CD4-positive, alpha-beta T cell (primary cell): ENCODE measurements at regions of chr10 and their contacts with region 1.

Region 1: DNA sequence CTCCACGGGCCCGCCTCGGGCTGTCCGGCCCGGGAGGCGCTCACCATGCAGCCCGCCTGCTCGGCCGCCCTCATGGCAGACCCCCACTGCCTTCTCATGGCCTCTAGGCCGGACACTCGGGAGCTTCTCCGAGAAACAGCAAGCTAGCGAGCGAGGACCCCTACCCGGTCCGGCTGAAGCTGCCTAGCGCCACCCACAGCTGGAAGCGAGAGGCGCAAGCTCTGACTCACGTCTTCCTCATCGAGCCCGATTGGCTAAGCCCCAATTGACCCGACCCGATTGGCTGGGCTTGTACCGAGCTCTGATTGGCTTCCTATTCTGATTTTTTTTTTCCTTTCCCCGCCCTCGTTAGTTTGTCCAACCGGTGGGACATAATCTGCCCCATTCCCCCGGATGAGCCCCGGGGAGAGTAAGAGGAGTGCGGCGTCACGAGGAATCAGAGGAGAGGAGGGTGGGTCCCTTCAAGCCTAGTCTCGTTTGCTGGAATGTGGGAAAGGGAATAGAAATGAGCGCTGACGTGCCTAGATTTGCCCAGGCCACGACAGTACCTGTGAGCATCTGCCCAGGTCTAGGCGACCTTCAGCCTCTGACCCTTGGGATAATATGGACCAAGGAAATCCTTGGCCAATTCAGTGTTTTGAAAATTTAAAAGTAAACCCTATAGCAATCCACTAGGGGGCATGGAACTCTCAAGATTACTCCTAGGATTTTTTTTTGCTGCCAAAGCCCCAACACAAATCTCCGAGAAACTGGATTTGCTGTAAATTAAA is at the start of gene TYSND1:
- DNase-seq: peak; percentile 84 to 97 (median 90)
- ATAC-seq: peak; percentile 82
- H3K4me3 ChIP-seq: peak within 1 kb of the TSS; percentile 82
- H3K4me3 Mint-ChIP-seq: peak within 1 kb of the TSS; percentile 92
- H3K27ac ChIP-seq: peak within 1 kb of the TSS; percentile 76 to 87
- H3K27ac Mint-ChIP-seq: peak within 1 kb of the TSS; percentile 91
- H3K4me1 ChIP-seq: peaks cover 32% of the 10 kb centered on the region
- H3K4me1 Mint-ChIP-seq: peaks cover 45% of the 10 kb centered on the region
- H3K27me3 ChIP-seq: no peaks in the 10 kb centered on the region
- H3K27me3 Mint-ChIP-seq: no peaks in the 10 kb centered on the region
- CTCF ChIP-seq: peak; percentile 78
- total RNA-seq, gene TYSND1: 12.6 to 13.0 TPM

Region 2: DNA sequence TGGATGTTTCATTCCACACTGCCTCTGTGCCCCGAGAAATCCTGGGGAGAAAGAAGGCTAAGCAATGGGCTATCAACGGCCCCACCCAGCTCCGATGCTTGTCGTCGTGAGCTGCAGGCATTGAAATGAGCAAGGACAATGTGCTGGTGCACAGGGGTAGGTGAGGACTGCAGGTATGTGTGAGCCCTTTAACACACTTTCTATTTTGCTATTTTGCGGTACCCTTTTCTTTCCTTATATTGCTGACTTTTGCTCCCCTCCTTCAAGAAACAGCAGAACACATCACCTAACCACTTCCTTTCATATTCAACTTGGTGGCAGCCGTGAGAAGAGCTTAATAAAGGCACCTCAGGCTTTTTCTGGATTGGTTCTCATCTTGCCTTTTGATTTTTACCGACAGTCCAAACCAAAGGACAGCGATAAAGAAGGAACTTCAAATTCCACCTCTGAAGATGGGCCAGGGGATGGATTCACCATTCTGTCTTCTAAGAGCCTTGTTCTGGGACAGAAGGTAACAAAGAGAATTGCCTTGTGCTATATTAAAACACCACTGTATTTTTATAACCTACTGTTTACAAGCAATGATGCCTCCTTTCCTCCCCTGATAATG is 53.2 kb before region 1 on chr10:
- CTCF ChIA-PET with region 1: interaction called, 7 read pairs
- POLR2A ChIA-PET with region 1: interaction called, 61 read pairs
- intact Hi-C with region 1: loop called in 1 of 2 experiments (anchors 2 kb)
- DNase-seq: peak in 6 of 14 experiments; percentile 2 to 79 (median 42)
- ATAC-seq: peak; percentile 63
- H3K4me3 ChIP-seq: peak overlapping the region; percentile 49
- H3K4me3 Mint-ChIP-seq: peak overlapping the region; percentile 75
- H3K27ac ChIP-seq: peak overlapping the region; percentile 47 to 52
- H3K27ac Mint-ChIP-seq: peak overlapping the region; percentile 99
- H3K4me1 ChIP-seq: peaks cover 34% of the 10 kb centered on the region
- H3K4me1 Mint-ChIP-seq: peaks cover 64% of the 10 kb centered on the region
- H3K27me3 ChIP-seq: no peaks in the 10 kb centered on the region
- H3K27me3 Mint-ChIP-seq: no peaks in the 10 kb centered on the region
- CTCF ChIP-seq: no peak

Region 3: DNA sequence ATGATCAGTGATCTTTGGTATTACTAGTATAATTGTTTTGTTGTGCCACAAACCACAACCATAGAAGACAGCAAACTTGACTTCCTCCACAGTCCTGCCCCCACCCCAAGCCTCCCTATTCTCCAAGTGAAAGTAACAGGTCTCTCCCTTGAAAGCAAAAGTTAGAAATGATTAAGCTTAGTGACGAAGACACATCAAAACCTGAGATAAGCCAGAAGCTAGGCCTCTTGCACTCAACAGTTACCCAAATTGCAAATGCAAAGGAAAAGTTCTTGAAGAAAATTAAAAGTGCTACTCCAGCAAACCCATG is 16.2 kb after region 1 on chr10:
- CTCF ChIA-PET with region 1: interaction called, 64 read pairs
- POLR2A ChIA-PET with region 1: interaction called, 138 read pairs
- intact Hi-C with region 1: no loop called
- DNase-seq: peak in 8 of 14 experiments; percentile 18 to 88 (median 52)
- ATAC-seq: peak; percentile 81
- H3K4me3 ChIP-seq: peak overlapping the region; percentile 4
- H3K4me3 Mint-ChIP-seq: peak overlapping the region; percentile 59
- H3K27ac ChIP-seq: peak overlapping the region in 1 of 2 donors; percentile 49
- H3K27ac Mint-ChIP-seq: peak overlapping the region; percentile 80
- H3K4me1 ChIP-seq: peaks cover 44% of the 10 kb centered on the region
- H3K4me1 Mint-ChIP-seq: peaks cover 79% of the 10 kb centered on the region
- H3K27me3 ChIP-seq: no peaks in the 10 kb centered on the region
- H3K27me3 Mint-ChIP-seq: no peaks in the 10 kb centered on the region
- CTCF ChIP-seq: no peak

Region 4: DNA sequence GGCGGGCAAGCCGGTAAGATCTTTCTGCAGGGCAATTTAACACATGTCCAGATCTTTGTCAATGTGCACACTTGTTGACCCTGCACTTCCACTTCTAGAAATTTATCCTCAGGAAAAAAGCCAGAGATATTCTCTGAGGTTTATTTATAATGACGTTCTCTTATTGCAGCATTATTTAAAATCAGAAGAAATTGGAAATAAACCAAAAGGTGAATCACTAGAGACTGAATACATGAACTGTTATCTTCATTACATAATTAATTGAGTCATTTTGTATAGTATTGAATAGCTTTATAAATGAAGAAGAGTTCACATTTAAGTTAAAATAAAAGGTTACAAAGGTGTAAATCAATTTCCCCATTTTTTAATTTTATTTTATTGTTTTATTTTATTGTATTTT is 39.9 kb after region 1 on chr10:
- CTCF ChIA-PET with region 1: no interaction called
- POLR2A ChIA-PET with region 1: no interaction called
- intact Hi-C with region 1: no loop called
- DNase-seq: no peak
- ATAC-seq: no peak
- H3K4me3 ChIP-seq: no peak overlapping the region
- H3K4me3 Mint-ChIP-seq: no peak overlapping the region
- H3K27ac ChIP-seq: no peak overlapping the region
- H3K27ac Mint-ChIP-seq: no peak overlapping the region
- H3K4me1 ChIP-seq: no peaks in the 10 kb centered on the region
- H3K4me1 Mint-ChIP-seq: no peaks in the 10 kb centered on the region
- H3K27me3 ChIP-seq: no peaks in the 10 kb centered on the region
- H3K27me3 Mint-ChIP-seq: no peaks in the 10 kb centered on the region
- CTCF ChIP-seq: no peak

Region 5: GRCh38 chr10:70221030-70221429 is 74.4 kb after region 1 on chr10:
- CTCF ChIA-PET with region 1: interaction called, 12 read pairs
- POLR2A ChIA-PET with region 1: interaction called, 10 read pairs
- intact Hi-C with region 1: no loop called
- DNase-seq: peak in 1 of 14 experiments; percentile 8
- ATAC-seq: no peak
- H3K4me3 ChIP-seq: no peak overlapping the region
- H3K4me3 Mint-ChIP-seq: no peak overlapping the region
- H3K27ac ChIP-seq: no peak overlapping the region
- H3K27ac Mint-ChIP-seq: peak overlapping the region; percentile 21
- H3K4me1 ChIP-seq: peaks cover 3% of the 10 kb centered on the region
- H3K4me1 Mint-ChIP-seq: peaks cover 17% of the 10 kb centered on the region
- H3K27me3 ChIP-seq: no peaks in the 10 kb centered on the region
- H3K27me3 Mint-ChIP-seq: no peaks in the 10 kb centered on the region
- CTCF ChIP-seq: no peak

Region 6: GRCh38 chr10:70404036-70404786 is 257.5 kb after region 1 on chr10 and contains the start of gene EIF4EBP2:
- CTCF ChIA-PET with region 1: interaction called, 6 read pairs
- POLR2A ChIA-PET with region 1: interaction called, 21 read pairs
- intact Hi-C with region 1: loop called in 1 of 2 experiments (anchors 5 kb)
- DNase-seq: peak; percentile 94 to 100 (median 98)
- ATAC-seq: peak; percentile 93
- H3K4me3 ChIP-seq: peak within 1 kb of the TSS; percentile 87
- H3K4me3 Mint-ChIP-seq: peak within 1 kb of the TSS; percentile 96
- H3K27ac ChIP-seq: peak within 1 kb of the TSS; percentile 60 to 74
- H3K27ac Mint-ChIP-seq: peak within 1 kb of the TSS; percentile 86
- H3K4me1 ChIP-seq: peaks cover 35% of the 10 kb centered on the region
- H3K4me1 Mint-ChIP-seq: peaks cover 50% of the 10 kb centered on the region
- H3K27me3 ChIP-seq: no peaks in the 10 kb centered on the region
- H3K27me3 Mint-ChIP-seq: no peaks in the 10 kb centered on the region
- CTCF ChIP-seq: no peak
- total RNA-seq, gene EIF4EBP2: 21.4 to 22.6 TPM